ENCODE measurements at regions of chr9 and their contacts with region 1.

Region 1: GRCh38 chr9:13088720-13089427 is 190.6 kb downstream of the MPDZ start:
- DNase-seq: no peak
- H3K4me3 ChIP-seq: no peak overlapping the region; the same call in 1 of the 2 replicates
- CTCF ChIP-seq: peak; percentile 70

Region 2: GRCh38 chr9:12702160-12702758 is 386.6 kb before region 1 on chr9:
- CTCF ChIA-PET with region 1: interaction called, 12 read pairs
- POLR2A ChIA-PET with region 1: no interaction called
- DNase-seq: no peak
- H3K4me3 ChIP-seq: no peak overlapping the region
- CTCF ChIP-seq: peak; percentile 68

Region 3: GRCh38 chr9:13033959-13034693 is 54.7 kb before region 1 on chr9:
- CTCF ChIA-PET with region 1: interaction called, 73 read pairs
- POLR2A ChIA-PET with region 1: no interaction called
- DNase-seq: no peak
- H3K4me3 ChIP-seq: peak overlapping the region; percentile 39; the same call in 1 of the 2 replicates
- CTCF ChIP-seq: peak; percentile 86

Region 4: GRCh38 chr9:13078164-13078563 is 10.7 kb before region 1 on chr9:
- CTCF ChIA-PET with region 1: interaction called, 15 read pairs
- POLR2A ChIA-PET with region 1: no interaction called
- DNase-seq: no peak
- H3K4me3 ChIP-seq: no peak overlapping the region
- CTCF ChIP-seq: no peak

Region 5: DNA sequence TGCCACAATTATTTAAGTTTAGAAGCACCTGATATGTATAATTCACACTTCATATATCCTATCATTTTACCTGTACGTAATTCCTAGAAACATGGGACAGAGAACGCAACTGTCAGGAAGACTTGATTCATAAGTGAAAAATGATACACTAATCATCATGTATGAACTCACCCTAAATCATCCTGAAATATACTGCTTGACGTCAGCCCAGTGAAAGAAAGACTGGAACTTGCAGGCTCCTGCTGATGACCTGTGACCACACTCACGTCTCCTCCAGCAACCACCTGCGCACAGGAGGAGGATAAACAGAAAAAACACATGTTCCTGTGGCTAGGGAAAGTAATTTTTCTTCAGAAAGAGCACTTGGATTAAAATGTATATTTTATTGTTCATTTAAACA is 20.9 kb after region 1 on chr9:
- CTCF ChIA-PET with region 1: interaction called, 45 read pairs
- POLR2A ChIA-PET with region 1: no interaction called
- DNase-seq: no peak
- H3K4me3 ChIP-seq: no peak overlapping the region
- CTCF ChIP-seq: no peak